Ovary (tissue), 10 donors: ENCODE measurements at regions of chr5 and their contacts with region 1.

Region 1: GRCh38 chr5:180209137-180209581 is at the start of gene RASGEF1C:
- DNase-seq: peak; percentile 33 to 77 (median 55)
- H3K4me3 ChIP-seq: no peak within 1 kb of the TSS
- H3K27ac ChIP-seq: no peak within 1 kb of the TSS
- H3K4me1 ChIP-seq: peaks cover 1% of the 10 kb centered on the region
- H3K27me3 ChIP-seq: no peaks in the 10 kb centered on the region
- CTCF ChIP-seq: peak in 1 of 3 donors; percentile 38
- EP300 ChIP-seq: no peak
- POLR2A ChIP-seq: no peak
- total RNA-seq, gene RASGEF1C: 0.22 to 0.57 (median 0.38) TPM in 5 of 7 donors, not detected in the others

Region 2: GRCh38 chr5:179886190-179886911 is 322.8 kb before region 1 on chr5:
- intact Hi-C with region 1: no loop called
- DNase-seq: no peak
- H3K4me3 ChIP-seq: no peak overlapping the region
- H3K27ac ChIP-seq: no peak overlapping the region
- H3K4me1 ChIP-seq: no peaks in the 10 kb centered on the region
- H3K27me3 ChIP-seq: no peaks in the 10 kb centered on the region
- CTCF ChIP-seq: no peak
- EP300 ChIP-seq: no peak
- POLR2A ChIP-seq: no peak

Region 3: GRCh38 chr5:180126726-180127681 is 82.2 kb before region 1 on chr5:
- intact Hi-C with region 1: loop called in 1 of 4 experiments (anchors 5 kb)
- DNase-seq: peak in 1 of 5 donors; percentile 48
- H3K4me3 ChIP-seq: no peak overlapping the region
- H3K27ac ChIP-seq: no peak overlapping the region
- H3K4me1 ChIP-seq: no peaks in the 10 kb centered on the region
- H3K27me3 ChIP-seq: no peaks in the 10 kb centered on the region
- CTCF ChIP-seq: peak in 1 of 3 donors; percentile 33
- EP300 ChIP-seq: no peak
- POLR2A ChIP-seq: no peak

Region 4: GRCh38 chr5:180402716-180403115 is 193.6 kb after region 1 on chr5:
- intact Hi-C with region 1: no loop called
- DNase-seq: no peak
- H3K4me3 ChIP-seq: no peak overlapping the region
- H3K27ac ChIP-seq: no peak overlapping the region
- H3K4me1 ChIP-seq: no peaks in the 10 kb centered on the region
- H3K27me3 ChIP-seq: no peaks in the 10 kb centered on the region
- CTCF ChIP-seq: no peak
- EP300 ChIP-seq: no peak
- POLR2A ChIP-seq: no peak